Breast epithelium (tissue), 4 donors: ENCODE measurements at regions of chr5 and their contacts with region 1.

Region 1: DNA sequence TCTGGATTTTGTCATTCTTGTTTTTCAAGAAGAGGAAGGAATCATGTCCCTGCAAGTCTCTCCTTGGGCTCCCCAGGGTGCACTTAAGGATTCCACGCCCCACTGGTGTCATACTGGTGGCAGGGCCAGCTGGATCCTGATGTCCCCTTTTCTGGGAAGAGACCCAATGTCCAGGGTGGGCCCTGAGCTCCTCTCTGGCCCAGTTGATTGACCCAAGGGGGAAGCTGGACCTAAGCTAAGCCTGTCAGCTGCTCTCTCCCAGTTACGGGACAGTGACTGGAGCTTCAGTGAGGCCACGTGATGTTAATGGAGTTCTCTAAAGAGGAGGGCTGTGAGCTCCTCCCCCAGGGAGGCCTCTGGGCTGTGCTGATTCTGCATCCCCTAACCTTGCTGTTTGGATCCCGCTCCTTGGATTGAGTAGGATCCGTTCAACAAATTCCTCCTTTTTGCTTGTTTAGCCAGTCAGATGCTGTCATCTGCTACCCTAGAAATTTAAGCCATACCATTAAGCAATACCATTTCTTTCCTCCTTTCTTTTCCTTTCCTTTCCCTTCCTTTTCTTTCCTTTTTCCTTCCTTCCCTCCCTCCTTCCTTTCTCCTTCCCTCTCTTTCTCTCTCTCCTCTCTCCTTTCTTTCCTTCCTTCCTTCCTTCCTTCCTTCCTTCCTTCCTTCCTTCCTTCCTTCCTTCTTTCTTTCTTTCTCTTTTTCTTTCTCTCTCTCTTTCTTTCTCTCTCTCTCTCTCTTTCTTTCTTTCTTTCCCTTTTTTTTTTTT is 17.2 kb downstream of the NKX2-5 start:
- DNase-seq: no peak
- H3K4me3 ChIP-seq: no peak overlapping the region
- H3K27ac ChIP-seq: no peak overlapping the region
- H3K4me1 ChIP-seq: no peaks in the 10 kb centered on the region
- H3K27me3 ChIP-seq: no peaks in the 10 kb centered on the region
- CTCF ChIP-seq: no peak
- POLR2A ChIP-seq: no peak

Region 2: DNA sequence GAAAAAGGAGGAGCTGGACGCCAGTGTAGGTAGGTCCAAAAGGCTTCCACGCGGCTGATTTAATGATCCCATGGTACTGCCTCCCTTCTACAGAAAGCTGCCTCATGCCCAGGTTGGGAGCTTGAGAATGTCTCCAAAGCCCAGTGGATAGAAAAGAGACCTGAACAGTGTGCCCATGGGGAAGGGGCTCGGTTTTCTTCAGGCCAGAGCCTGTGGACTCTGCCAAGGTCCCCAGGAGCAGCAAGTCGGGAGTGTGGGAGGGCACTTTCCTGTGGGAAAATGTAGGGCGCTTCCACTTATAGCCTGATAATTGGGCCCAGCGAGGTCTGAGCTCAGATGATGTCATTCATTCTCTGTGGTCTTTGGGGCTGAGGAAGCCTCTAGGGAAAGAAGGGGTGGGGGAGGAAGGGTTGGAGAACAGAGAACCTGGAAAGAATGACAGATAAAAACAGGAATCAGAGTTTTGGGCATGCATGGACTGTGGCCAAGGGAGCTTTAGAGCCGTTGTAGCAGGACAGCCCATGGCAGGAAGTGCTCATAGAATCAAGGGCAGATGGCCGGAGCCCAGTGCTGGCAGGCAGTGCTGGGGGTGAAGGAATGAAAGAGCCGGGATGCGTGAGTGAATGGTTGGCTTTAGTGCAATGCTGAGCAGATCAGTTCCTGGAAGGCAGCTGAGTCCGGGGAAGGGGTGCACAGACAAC is 721.0 kb before region 1 on chr5:
- intact Hi-C with region 1: no loop called
- DNase-seq: no peak
- H3K4me3 ChIP-seq: no peak overlapping the region
- H3K27ac ChIP-seq: peak overlapping the region in 1 of 2 donors; percentile 52
- H3K4me1 ChIP-seq: no peaks in the 10 kb centered on the region
- H3K27me3 ChIP-seq: no peaks in the 10 kb centered on the region
- CTCF ChIP-seq: no peak
- POLR2A ChIP-seq: no peak

Region 3: DNA sequence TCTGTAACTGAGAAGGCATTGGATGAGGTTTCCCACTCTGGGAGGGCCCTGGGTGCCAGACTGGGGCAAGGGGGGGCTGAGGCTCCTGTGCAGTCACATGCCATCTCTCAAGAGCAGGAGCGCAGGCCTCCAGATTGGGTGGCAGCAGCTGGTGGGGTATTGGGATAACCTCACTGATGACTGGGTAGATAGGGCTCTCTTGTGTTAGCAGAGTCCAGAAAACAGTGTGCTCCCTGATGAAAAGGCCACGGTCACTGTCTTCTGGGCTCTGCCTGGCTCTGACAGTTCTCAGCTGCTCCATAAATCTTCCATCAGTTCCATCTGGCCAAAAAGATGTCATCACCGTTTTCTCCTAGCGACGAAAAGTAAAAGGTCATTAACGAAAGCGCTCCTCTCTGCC is 39.0 kb after region 1 on chr5:
- intact Hi-C with region 1: loop called (anchors 1 kb)
- DNase-seq: no peak
- H3K4me3 ChIP-seq: no peak overlapping the region
- H3K27ac ChIP-seq: no peak overlapping the region
- H3K4me1 ChIP-seq: no peaks in the 10 kb centered on the region
- H3K27me3 ChIP-seq: peaks cover 0 to 29% of the 10 kb centered on the region in 2 donors
- CTCF ChIP-seq: no peak
- POLR2A ChIP-seq: no peak